ENCODE measurements at regions of chr16 and their contacts with region 1.

Region 1: GRCh38 chr16:10871149-10871991 is 5.6 kb upstream of the CIITA start:
- DNase-seq: peak; percentile 56
- ATAC-seq: peak; percentile 51
- H3K4me3 Mint-ChIP-seq: peak overlapping the region; percentile 70
- H3K27ac Mint-ChIP-seq: peak overlapping the region; percentile 91
- H3K4me1 Mint-ChIP-seq: peaks cover 99% of the 10 kb centered on the region
- H3K27me3 Mint-ChIP-seq: no peaks in the 10 kb centered on the region
- CTCF ChIP-seq: no peak

Region 2: GRCh38 chr16:9090960-9091866 is 1780.2 kb before region 1 on chr16 and contains the start of gene HAPSTR1:
- CTCF ChIA-PET with region 1: no interaction called
- POLR2A ChIA-PET with region 1: no interaction called
- intact Hi-C with region 1: loop called (anchors 5 kb)
- DNase-seq: peak; percentile 95
- ATAC-seq: peak; percentile 84
- H3K4me3 Mint-ChIP-seq: peak within 1 kb of the TSS; percentile 99
- H3K27ac Mint-ChIP-seq: peak within 1 kb of the TSS; percentile 98
- H3K4me1 Mint-ChIP-seq: peaks cover 51% of the 10 kb centered on the region
- H3K27me3 Mint-ChIP-seq: no peaks in the 10 kb centered on the region
- CTCF ChIP-seq: no peak
- total RNA-seq, gene HAPSTR1: 77.0 and 85.6 TPM in 2 replicates

Region 3: GRCh38 chr16:10765772-10766171 is 105.6 kb before region 1 on chr16:
- CTCF ChIA-PET with region 1: no interaction called
- POLR2A ChIA-PET with region 1: interaction called, 25 read pairs
- intact Hi-C with region 1: loop called (anchors 1 kb)
- DNase-seq: peak; percentile 57
- ATAC-seq: peak; percentile 97
- H3K4me3 Mint-ChIP-seq: peak overlapping the region; percentile 56
- H3K27ac Mint-ChIP-seq: peak overlapping the region; percentile 84
- H3K4me1 Mint-ChIP-seq: peaks cover 44% of the 10 kb centered on the region
- H3K27me3 Mint-ChIP-seq: no peaks in the 10 kb centered on the region
- CTCF ChIP-seq: no peak

Region 4: GRCh38 chr16:10806698-10807097 is 64.7 kb before region 1 on chr16:
- CTCF ChIA-PET with region 1: interaction called, 7 read pairs
- POLR2A ChIA-PET with region 1: interaction called, 39 read pairs
- intact Hi-C with region 1: loop called (anchors 1 kb)
- DNase-seq: no peak
- ATAC-seq: peak; percentile 54
- H3K4me3 Mint-ChIP-seq: peak overlapping the region; percentile 46
- H3K27ac Mint-ChIP-seq: peak overlapping the region; percentile 89
- H3K4me1 Mint-ChIP-seq: peaks cover 79% of the 10 kb centered on the region
- H3K27me3 Mint-ChIP-seq: no peaks in the 10 kb centered on the region
- CTCF ChIP-seq: no peak

Region 5: GRCh38 chr16:10883004-10883403 is 11.6 kb after region 1 on chr16:
- CTCF ChIA-PET with region 1: interaction called, 76 read pairs
- POLR2A ChIA-PET with region 1: interaction called, 318 read pairs
- intact Hi-C with region 1: no loop called
- DNase-seq: no peak
- ATAC-seq: no peak
- H3K4me3 Mint-ChIP-seq: peak overlapping the region; percentile 55
- H3K27ac Mint-ChIP-seq: peak overlapping the region; percentile 87
- H3K4me1 Mint-ChIP-seq: peaks cover 81% of the 10 kb centered on the region
- H3K27me3 Mint-ChIP-seq: no peaks in the 10 kb centered on the region
- CTCF ChIP-seq: no peak

Region 6: GRCh38 chr16:10906914-10907756 is 35.8 kb after region 1 on chr16:
- CTCF ChIA-PET with region 1: interaction called, 8 read pairs
- POLR2A ChIA-PET with region 1: interaction called, 234 read pairs
- intact Hi-C with region 1: loop called (anchors 1 kb)
- DNase-seq: no peak
- ATAC-seq: no peak
- H3K4me3 Mint-ChIP-seq: no peak overlapping the region
- H3K27ac Mint-ChIP-seq: peak overlapping the region; percentile 64
- H3K4me1 Mint-ChIP-seq: peaks cover 66% of the 10 kb centered on the region
- H3K27me3 Mint-ChIP-seq: no peaks in the 10 kb centered on the region
- CTCF ChIP-seq: no peak

Region 7: GRCh38 chr16:10929853-10930754 is 58.7 kb after region 1 on chr16:
- CTCF ChIA-PET with region 1: no interaction called
- POLR2A ChIA-PET with region 1: no interaction called
- intact Hi-C with region 1: no loop called
- DNase-seq: no peak
- ATAC-seq: peak; percentile 14
- H3K4me3 Mint-ChIP-seq: peak overlapping the region; percentile 5
- H3K27ac Mint-ChIP-seq: peak overlapping the region; percentile 71
- H3K4me1 Mint-ChIP-seq: peaks cover 54% of the 10 kb centered on the region
- H3K27me3 Mint-ChIP-seq: no peaks in the 10 kb centered on the region
- CTCF ChIP-seq: no peak

Region 8: GRCh38 chr16:11032922-11033291 is 161.5 kb after region 1 on chr16:
- CTCF ChIA-PET with region 1: no interaction called
- POLR2A ChIA-PET with region 1: no interaction called
- intact Hi-C with region 1: no loop called
- DNase-seq: no peak
- ATAC-seq: no peak
- H3K4me3 Mint-ChIP-seq: no peak overlapping the region
- H3K27ac Mint-ChIP-seq: no peak overlapping the region
- H3K4me1 Mint-ChIP-seq: peaks cover 3% of the 10 kb centered on the region
- H3K27me3 Mint-ChIP-seq: no peaks in the 10 kb centered on the region
- CTCF ChIP-seq: no peak

Measured in activated B cell treated with CpG ODN at 0.5 μM for 24 hours (primary cell).